Heart left ventricle (tissue), 16 donors: ENCODE measurements at regions of chr15 and their contacts with region 1.

Region 1: GRCh38 chr15:62389885-62390790 is 225.1 kb upstream of the C2CD4B start:
- DNase-seq: peak; percentile 73 to 86 (median 79)
- ATAC-seq: peak; percentile 61 to 90 (median 85)
- H3K4me3 ChIP-seq: peak within 1 kb of the TSS; percentile 72 to 97 (median 92)
- H3K27ac ChIP-seq: peak within 1 kb of the TSS; percentile 74 to 92 (median 84)
- H3K4me1 ChIP-seq: peaks cover 0 to 25% (median 13%) of the 10 kb centered on the region in 12 donors
- H3K27me3 ChIP-seq: peaks cover 0 to 23% (median 0%) of the 10 kb centered on the region in 9 donors
- CTCF ChIP-seq: no peak
- POLR2A ChIP-seq: peak; percentile 62 to 86

Region 2: DNA sequence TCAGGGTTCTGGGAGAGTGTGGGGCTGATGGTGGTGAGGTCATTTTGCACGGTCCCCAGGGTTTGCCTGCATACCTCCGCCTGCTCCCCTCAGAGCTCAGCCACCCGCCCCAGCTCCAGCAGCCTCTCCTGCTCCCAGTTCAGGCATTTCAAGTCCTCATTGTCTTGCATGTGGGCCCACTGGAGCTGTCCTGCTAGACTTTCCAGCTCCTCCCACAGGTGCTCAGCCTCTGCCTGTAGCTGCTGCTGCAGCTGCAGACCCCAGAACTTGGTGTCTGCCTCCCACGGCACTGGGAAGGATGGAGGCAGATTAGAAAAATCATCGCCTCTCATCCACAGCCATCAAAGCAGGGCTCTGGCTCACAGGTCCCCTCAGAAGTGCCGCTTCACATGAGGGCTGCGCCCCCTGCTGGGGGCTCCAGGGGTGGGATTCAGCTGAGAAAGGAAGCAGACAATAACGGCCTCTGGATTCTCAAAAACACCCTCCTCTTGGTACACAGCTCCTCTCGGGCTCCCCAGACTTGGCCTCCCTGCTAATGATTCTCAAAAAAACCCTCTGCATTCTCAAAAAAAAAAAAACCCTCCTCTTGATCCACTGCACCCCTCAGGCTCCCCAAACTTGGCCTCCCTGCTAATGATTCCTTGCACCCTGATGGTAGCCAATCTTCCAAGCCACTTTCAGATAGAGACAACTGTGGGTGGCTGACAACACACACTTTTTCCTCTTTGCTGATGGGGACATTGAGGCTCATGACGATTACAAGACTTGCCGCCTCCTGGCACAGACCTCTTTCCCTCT is 135.8 kb before region 1 on chr15:
- intact Hi-C with region 1: no loop called
- DNase-seq: peak; percentile 61 to 82 (median 67)
- ATAC-seq: peak in 3 of 4 donors; percentile 49 to 79 (median 50)
- H3K4me3 ChIP-seq: no peak overlapping the region
- H3K27ac ChIP-seq: no peak overlapping the region
- H3K4me1 ChIP-seq: no peaks in the 10 kb centered on the region
- H3K27me3 ChIP-seq: no peaks in the 10 kb centered on the region
- CTCF ChIP-seq: peak; percentile 56 to 81 (median 72)
- POLR2A ChIP-seq: no peak

Region 3: DNA sequence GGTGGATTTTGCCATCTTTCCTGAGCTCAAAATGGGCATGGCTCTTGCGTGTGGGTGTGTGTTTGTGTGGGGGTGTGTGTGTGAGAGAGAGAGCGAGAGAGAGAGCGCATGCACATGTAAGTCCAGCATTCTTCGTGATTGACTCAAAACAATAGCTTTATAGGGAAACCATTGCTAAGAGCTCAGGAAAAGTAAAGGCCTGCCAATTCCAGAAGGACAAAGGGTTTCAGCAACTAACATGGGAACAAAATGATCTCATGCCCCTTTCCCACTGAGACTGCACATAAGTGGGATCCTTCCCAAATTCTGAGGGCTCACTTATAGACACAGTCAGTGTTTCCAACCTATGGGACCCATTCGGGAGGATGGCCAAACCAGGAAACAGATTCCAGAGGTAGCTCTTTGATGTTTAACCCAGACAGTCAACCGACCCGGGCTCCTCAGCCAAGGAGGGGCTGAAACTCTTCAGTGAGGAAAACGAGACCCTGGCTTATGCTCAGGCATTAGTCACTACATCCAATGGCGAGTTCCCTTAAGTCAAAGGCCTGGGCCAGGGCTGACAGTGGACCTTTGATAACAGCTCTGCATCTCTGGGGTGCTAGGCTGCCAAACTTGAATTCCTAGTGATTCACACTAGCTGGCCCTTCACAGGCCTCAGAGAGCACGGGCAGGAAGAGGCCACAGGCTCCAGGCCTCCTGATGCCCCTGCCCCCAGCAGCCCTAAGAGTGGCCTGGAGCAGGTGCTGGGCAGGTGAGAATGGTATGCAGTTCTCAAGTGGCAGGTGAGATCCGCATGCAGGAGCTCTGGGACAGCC is 79.9 kb after region 1 on chr15:
- intact Hi-C with region 1: loop called in 1 of 10 experiments (anchors 5 kb)
- DNase-seq: peak in 3 of 5 donors; percentile 47 to 77 (median 75)
- ATAC-seq: peak; percentile 19 to 84 (median 70)
- H3K4me3 ChIP-seq: no peak overlapping the region
- H3K27ac ChIP-seq: peak overlapping the region; percentile 48 to 81 (median 64)
- H3K4me1 ChIP-seq: peaks cover 0 to 83% (median 54%) of the 10 kb centered on the region in 12 donors
- H3K27me3 ChIP-seq: no peaks in the 10 kb centered on the region
- CTCF ChIP-seq: no peak
- POLR2A ChIP-seq: no peak

Region 4: GRCh38 chr15:62549345-62549970 is 159.3 kb after region 1 on chr15:
- intact Hi-C with region 1: loop called in 6 of 10 experiments (anchors 5 to 10 kb)
- DNase-seq: no peak
- ATAC-seq: no peak
- H3K4me3 ChIP-seq: no peak overlapping the region
- H3K27ac ChIP-seq: no peak overlapping the region
- H3K4me1 ChIP-seq: peaks cover 3 to 52% (median 32%) of the 10 kb centered on the region in 12 donors
- H3K27me3 ChIP-seq: no peaks in the 10 kb centered on the region
- CTCF ChIP-seq: peak; percentile 9 to 58 (median 31)
- POLR2A ChIP-seq: no peak

Region 5: DNA sequence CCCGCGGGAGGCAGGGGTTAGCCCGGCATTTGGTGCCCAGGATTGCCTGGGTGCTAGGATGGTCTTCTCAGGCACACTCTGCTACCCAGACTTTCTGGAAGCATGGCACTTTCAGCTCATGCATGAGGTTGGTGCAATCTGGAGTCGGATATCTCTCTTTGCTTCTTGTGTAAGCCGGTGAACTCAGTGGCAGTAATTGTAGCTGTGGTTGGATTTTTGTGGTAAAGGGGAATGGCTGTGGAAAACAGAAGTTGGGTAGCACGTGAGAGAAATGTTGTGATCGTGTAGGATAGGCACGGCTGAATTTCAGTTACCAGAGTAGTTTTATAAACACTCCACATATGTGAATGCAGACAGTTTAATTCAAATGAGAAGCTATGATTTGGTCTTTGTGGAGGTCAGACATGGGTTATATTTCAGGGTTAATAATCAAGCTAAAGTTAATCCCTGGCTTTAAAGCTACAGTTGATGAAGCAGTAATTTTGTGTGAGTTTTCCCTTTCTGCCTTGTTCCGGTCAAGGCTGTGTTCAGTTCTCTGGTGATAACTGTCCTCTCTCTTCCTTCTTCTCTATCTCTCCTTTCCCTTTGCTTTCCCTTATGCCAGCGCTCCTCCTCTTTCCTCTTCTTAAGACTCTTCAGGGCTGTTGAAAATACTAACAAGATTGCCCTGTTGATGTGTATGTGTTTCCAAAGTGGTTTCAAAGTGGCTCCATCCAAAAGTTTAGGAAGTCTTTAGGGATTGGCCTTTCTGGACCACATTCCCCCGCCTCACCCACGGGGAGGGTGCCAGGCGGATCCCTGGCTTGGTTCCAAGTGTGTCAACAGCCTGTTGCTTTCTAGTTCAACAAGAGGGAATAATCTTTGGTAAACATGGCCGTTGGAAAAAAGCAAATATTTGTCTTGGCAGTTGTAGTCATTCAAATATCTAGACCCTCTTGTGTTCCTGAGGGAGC is 179.6 kb after region 1 on chr15:
- intact Hi-C with region 1: loop called in 1 of 10 experiments (anchors 10 kb)
- DNase-seq: peak; percentile 39 to 74 (median 68)
- ATAC-seq: peak in 3 of 4 donors; percentile 31 to 61 (median 32)
- H3K4me3 ChIP-seq: no peak overlapping the region
- H3K27ac ChIP-seq: peak overlapping the region in 3 of 12 donors; percentile 1 to 9 (median 1)
- H3K4me1 ChIP-seq: peaks cover 0 to 34% (median 15%) of the 10 kb centered on the region in 12 donors
- H3K27me3 ChIP-seq: no peaks in the 10 kb centered on the region
- CTCF ChIP-seq: no peak
- POLR2A ChIP-seq: no peak

Region 6: GRCh38 chr15:62584301-62585235 is 194.4 kb after region 1 on chr15:
- intact Hi-C with region 1: no loop called
- DNase-seq: no peak
- ATAC-seq: peak in 1 of 4 donors; percentile 58
- H3K4me3 ChIP-seq: no peak overlapping the region
- H3K27ac ChIP-seq: peak overlapping the region in 1 of 12 donors; percentile 25
- H3K4me1 ChIP-seq: peaks cover 0 to 9% (median 0%) of the 10 kb centered on the region in 12 donors
- H3K27me3 ChIP-seq: no peaks in the 10 kb centered on the region
- CTCF ChIP-seq: no peak
- POLR2A ChIP-seq: no peak

Region 7: DNA sequence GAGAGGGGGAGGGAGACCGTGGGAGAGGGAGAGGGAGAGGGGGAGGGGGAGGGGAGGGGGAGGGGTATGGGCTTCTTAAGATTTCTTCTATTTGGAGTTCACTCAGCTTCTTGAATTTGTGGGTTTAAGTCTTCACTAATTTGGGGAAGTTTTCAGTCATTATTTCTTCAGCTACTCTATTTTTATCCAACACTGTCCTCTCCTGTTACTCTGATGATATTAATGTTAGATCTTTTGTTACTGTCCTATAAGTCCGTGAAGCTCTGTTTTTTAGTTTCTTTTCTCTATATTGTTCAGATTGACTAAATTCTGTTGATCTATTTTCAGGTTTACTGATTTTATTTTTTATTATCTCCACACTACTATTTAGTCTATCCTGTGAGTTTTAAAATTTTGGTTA is 300.9 kb after region 1 on chr15:
- intact Hi-C with region 1: loop called in 2 of 10 experiments (anchors 5 kb)
- DNase-seq: no peak
- ATAC-seq: no peak
- H3K4me3 ChIP-seq: no peak overlapping the region
- H3K27ac ChIP-seq: no peak overlapping the region
- H3K4me1 ChIP-seq: no peaks in the 10 kb centered on the region
- H3K27me3 ChIP-seq: no peaks in the 10 kb centered on the region
- CTCF ChIP-seq: peak in 7 of 12 donors; percentile 7 to 41 (median 33)
- POLR2A ChIP-seq: no peak

Region 8: GRCh38 chr15:62706317-62706716 is 316.2 kb after region 1 on chr15:
- intact Hi-C with region 1: loop called in 2 of 10 experiments (anchors 10 kb)
- DNase-seq: no peak
- ATAC-seq: peak in 1 of 4 donors; percentile 34
- H3K4me3 ChIP-seq: no peak overlapping the region
- H3K27ac ChIP-seq: no peak overlapping the region
- H3K4me1 ChIP-seq: peaks cover 0 to 5% (median 0%) of the 10 kb centered on the region in 12 donors
- H3K27me3 ChIP-seq: no peaks in the 10 kb centered on the region
- CTCF ChIP-seq: peak in 2 of 12 donors; percentile 5 to 25
- POLR2A ChIP-seq: no peak

Region 9: GRCh38 chr15:62742409-62743171 is 352.5 kb after region 1 on chr15:
- intact Hi-C with region 1: loop called in 3 of 10 experiments (anchors 2 to 5 kb)
- DNase-seq: peak in 4 of 5 donors; percentile 40 to 51 (median 50)
- ATAC-seq: peak; percentile 55 to 83 (median 74)
- H3K4me3 ChIP-seq: no peak overlapping the region
- H3K27ac ChIP-seq: peak overlapping the region in 7 of 12 donors; percentile 2 to 57 (median 30)
- H3K4me1 ChIP-seq: peaks cover 0 to 19% (median 12%) of the 10 kb centered on the region in 12 donors
- H3K27me3 ChIP-seq: no peaks in the 10 kb centered on the region
- CTCF ChIP-seq: peak; percentile 65 to 89 (median 80)
- POLR2A ChIP-seq: no peak